ENCODE measurements at regions of chr2 and their contacts with region 1.

Region 1: GRCh38 chr2:161316701-161317100 is 8.5 kb downstream of the PSMD14 start:
- DNase-seq: no peak
- ATAC-seq: no peak
- H3K4me3 ChIP-seq: no peak overlapping the region
- H3K27ac ChIP-seq: no peak overlapping the region
- H3K4me1 ChIP-seq: no peaks in the 10 kb centered on the region
- H3K27me3 ChIP-seq: no peaks in the 10 kb centered on the region
- CTCF ChIP-seq: no peak
- POLR2A ChIP-seq: no peak
- RAD21 ChIP-seq: no peak

Region 2: DNA sequence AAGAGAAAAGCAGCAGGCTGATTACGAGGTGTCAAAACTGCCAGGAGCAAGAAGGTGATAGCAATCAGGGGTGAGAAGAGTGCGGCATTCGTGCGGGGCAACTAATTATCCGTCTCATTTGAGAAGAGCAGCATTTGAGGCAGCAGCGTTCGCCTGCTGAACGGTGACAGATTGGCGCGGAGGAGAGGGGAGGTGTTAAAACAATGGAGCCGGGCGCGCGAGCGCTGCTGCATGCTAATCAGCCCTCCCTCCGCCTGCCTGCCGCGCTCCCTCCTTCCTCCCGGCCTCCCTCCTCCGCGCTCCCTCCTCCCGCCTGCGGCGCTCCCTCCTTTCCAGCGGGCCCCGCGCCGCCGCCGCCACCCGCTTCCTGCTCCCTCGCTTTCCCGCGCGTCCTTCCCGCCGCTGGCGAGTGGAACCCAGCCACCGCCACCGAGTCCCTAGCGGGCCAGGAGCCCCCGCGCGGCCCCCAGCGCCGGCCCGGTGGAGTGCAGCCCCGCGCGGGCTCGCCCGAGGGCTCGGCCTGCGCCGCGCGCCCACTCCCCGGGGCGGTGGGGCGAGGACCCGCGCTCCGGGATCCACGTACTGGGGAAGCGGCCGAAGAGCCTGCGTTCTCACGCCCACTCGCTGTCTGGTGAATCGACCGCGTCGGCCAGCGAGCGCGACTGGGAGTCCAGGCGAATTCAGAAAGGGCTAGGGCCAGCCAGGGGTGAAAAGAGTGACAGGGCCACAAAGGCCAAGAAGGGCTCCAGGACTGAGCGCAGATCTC is 78.0 kb before region 1 on chr2:
- CTCF ChIA-PET with region 1: no interaction called
- POLR2A ChIA-PET with region 1: no interaction called
- RAD21 ChIA-PET with region 1: no interaction called
- intact Hi-C with region 1: no loop called
- DNase-seq: no peak
- ATAC-seq: no peak
- H3K4me3 ChIP-seq: no peak overlapping the region
- H3K27ac ChIP-seq: no peak overlapping the region
- H3K4me1 ChIP-seq: peaks cover 6 to 7% of the 10 kb centered on the region in 2 experiments
- H3K27me3 ChIP-seq: no peaks in the 10 kb centered on the region
- CTCF ChIP-seq: no peak
- POLR2A ChIP-seq: no peak
- RAD21 ChIP-seq: no peak

Region 3: GRCh38 chr2:161354106-161354505 is 37.4 kb after region 1 on chr2:
- CTCF ChIA-PET with region 1: no interaction called
- POLR2A ChIA-PET with region 1: no interaction called
- RAD21 ChIA-PET with region 1: no interaction called
- intact Hi-C with region 1: loop called (anchors 1 kb)
- DNase-seq: no peak
- ATAC-seq: no peak
- H3K4me3 ChIP-seq: no peak overlapping the region
- H3K27ac ChIP-seq: no peak overlapping the region
- H3K4me1 ChIP-seq: no peaks in the 10 kb centered on the region
- H3K27me3 ChIP-seq: no peaks in the 10 kb centered on the region
- CTCF ChIP-seq: no peak
- POLR2A ChIP-seq: no peak
- RAD21 ChIP-seq: no peak

Region 4: GRCh38 chr2:161412346-161412745 is 95.6 kb after region 1 on chr2:
- CTCF ChIA-PET with region 1: no interaction called
- POLR2A ChIA-PET with region 1: no interaction called
- RAD21 ChIA-PET with region 1: no interaction called
- intact Hi-C with region 1: no loop called
- DNase-seq: no peak
- ATAC-seq: no peak
- H3K4me3 ChIP-seq: no peak overlapping the region
- H3K27ac ChIP-seq: no peak overlapping the region
- H3K4me1 ChIP-seq: no peaks in the 10 kb centered on the region
- H3K27me3 ChIP-seq: no peaks in the 10 kb centered on the region
- CTCF ChIP-seq: no peak
- POLR2A ChIP-seq: no peak
- RAD21 ChIP-seq: no peak